Activated B cell treated with CpG ODN at 0.5 μM for 24 hours (primary cell): ENCODE measurements at regions of chr2 and their contacts with region 1.

Region 1: DNA sequence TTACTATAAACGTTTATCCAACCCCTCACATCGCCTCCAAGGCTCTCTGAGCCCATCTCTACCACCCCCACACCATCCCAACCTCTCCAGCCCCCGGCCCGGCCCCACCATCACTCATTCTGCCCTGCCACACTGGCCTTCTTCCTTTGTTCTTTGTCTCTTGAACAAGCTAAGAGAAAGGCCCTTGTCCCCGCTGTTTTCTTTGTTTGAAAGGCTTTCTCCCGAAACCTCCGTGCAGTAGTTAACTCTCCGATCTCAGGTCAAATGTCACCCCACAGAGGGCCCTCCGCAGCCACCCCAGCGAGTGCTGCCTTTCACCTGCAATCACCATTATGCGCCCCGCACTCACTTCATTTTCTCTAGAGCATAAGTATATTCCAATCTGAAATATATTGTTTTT is 100.4 kb downstream of the AFF3 start:
- DNase-seq: no peak
- ATAC-seq: no peak
- H3K4me3 Mint-ChIP-seq: no peak overlapping the region
- H3K27ac Mint-ChIP-seq: peak overlapping the region; percentile 59
- H3K4me1 Mint-ChIP-seq: peaks cover 60% of the 10 kb centered on the region
- H3K27me3 Mint-ChIP-seq: no peaks in the 10 kb centered on the region
- CTCF ChIP-seq: no peak

Region 2: GRCh38 chr2:99101697-99102096 is 940.3 kb before region 1 on chr2:
- CTCF ChIA-PET with region 1: no interaction called
- POLR2A ChIA-PET with region 1: no interaction called
- intact Hi-C with region 1: no loop called
- DNase-seq: no peak
- ATAC-seq: no peak
- H3K4me3 Mint-ChIP-seq: no peak overlapping the region
- H3K27ac Mint-ChIP-seq: no peak overlapping the region
- H3K4me1 Mint-ChIP-seq: no peaks in the 10 kb centered on the region
- H3K27me3 Mint-ChIP-seq: no peaks in the 10 kb centered on the region
- CTCF ChIP-seq: no peak

Region 3: GRCh38 chr2:100008956-100009355 is 33.0 kb before region 1 on chr2:
- CTCF ChIA-PET with region 1: no interaction called
- POLR2A ChIA-PET with region 1: no interaction called
- intact Hi-C with region 1: loop called (anchors 5 kb)
- DNase-seq: no peak
- ATAC-seq: no peak
- H3K4me3 Mint-ChIP-seq: no peak overlapping the region
- H3K27ac Mint-ChIP-seq: peak overlapping the region; percentile 50
- H3K4me1 Mint-ChIP-seq: peaks cover 24% of the 10 kb centered on the region
- H3K27me3 Mint-ChIP-seq: no peaks in the 10 kb centered on the region
- CTCF ChIP-seq: no peak

Region 4: DNA sequence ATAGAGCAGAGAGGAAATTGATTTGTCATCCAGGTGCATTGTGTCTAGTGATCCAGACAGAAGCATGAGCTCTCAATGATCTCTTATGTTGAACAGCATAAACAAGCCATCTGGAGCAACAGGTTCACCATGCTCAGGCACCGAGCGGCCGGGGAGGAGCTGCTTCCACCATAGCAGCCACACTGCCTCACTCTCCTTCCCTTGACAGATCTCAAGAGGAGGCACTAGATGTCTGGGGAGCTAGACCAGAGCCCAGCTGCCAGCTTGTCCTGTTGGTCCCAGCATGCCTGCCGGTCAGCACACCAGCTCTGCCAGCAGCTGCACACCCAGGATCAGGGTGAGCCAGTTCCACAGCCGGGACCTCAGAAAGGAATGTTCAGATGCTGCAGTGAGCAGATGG is 297.8 kb after region 1 on chr2:
- CTCF ChIA-PET with region 1: no interaction called
- POLR2A ChIA-PET with region 1: no interaction called
- intact Hi-C with region 1: no loop called
- DNase-seq: no peak
- ATAC-seq: no peak
- H3K4me3 Mint-ChIP-seq: no peak overlapping the region
- H3K27ac Mint-ChIP-seq: no peak overlapping the region
- H3K4me1 Mint-ChIP-seq: no peaks in the 10 kb centered on the region
- H3K27me3 Mint-ChIP-seq: peaks cover 21% of the 10 kb centered on the region
- CTCF ChIP-seq: no peak